ENCODE measurements at regions of chr18 and their contacts with region 1.

Region 1: GRCh38 chr18:12934454-12935071 is 13.2 kb upstream of the SEH1L start:
- DNase-seq: peak; percentile 33
- H3K4me3 ChIP-seq: no peak overlapping the region
- H3K27me3 ChIP-seq: no peaks in the 10 kb centered on the region
- CTCF ChIP-seq: peak; percentile 90

Region 2: DNA sequence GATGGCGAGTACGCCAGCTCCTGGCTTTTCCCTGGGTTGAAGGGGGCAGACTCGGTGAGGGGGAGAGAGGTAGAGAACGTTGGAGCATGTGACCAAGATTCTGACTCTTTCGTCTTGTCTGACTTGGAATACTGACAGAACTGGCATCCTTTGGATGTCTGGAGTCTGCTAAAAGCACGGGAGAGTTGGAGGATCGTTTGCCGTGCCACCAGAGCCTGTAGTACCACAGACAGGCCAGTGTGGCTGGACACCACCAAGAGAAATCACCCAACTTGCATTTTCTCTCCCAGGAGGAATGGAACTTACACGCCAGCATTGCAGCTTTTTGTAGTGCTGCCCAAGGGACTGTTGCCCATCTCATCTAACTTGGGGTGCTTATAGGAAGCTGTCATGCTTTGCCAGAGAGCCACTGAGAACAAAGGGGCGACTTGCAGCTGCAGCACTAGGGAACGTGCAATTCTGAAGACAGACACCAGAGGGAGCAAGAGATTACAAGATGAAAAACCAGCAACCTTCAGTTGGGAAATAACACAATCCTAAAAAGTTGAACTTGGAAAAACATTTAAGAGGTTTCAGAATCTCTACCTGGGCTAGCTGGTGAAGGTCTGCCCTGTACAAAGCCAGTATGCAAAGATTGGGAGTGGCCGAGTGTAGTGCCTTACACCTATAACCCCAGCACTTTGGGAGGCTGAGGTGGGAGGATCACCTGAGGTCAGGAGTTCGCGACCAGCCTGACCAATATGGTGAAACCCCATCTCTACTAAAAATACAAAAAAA is 207.6 kb before region 1 on chr18:
- CTCF ChIA-PET with region 1: interaction called, 157 read pairs
- POLR2A ChIA-PET with region 1: no interaction called
- DNase-seq: no peak
- H3K4me3 ChIP-seq: no peak overlapping the region
- H3K27me3 ChIP-seq: no peaks in the 10 kb centered on the region
- CTCF ChIP-seq: peak; percentile 86

Region 3: DNA sequence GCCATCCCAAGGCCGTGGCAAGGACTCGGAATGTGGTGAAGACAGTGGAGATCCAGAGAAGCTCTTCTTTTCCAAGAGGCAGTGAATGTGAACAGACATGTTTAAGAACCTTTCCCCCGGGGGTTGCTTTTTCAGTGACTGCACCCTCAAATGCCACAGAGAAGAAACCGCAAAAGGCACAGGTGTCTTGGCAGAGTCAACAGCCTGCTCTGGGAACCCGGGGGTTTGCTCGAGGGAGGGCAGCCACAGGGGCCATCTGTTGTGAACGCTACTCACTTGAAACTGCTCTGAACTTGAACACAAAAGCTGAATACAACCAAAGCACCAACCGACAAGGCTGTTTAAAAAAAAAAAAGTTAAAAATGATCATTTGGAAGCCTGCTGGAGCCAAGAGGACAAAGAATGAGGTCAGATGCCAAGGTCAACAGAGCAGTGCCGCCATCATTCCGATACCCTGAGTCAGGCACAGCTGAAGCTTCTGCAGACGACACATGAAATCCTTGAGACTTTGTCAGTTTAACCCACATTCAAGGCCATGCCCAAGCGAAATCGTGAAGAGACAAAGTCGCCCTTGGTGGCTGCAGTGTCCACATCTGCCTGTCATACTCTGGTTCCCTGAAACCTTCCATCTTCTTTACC is 184.4 kb before region 1 on chr18:
- CTCF ChIA-PET with region 1: interaction called, 88 read pairs
- POLR2A ChIA-PET with region 1: no interaction called
- DNase-seq: no peak
- H3K4me3 ChIP-seq: no peak overlapping the region
- H3K27me3 ChIP-seq: no peaks in the 10 kb centered on the region
- CTCF ChIP-seq: no peak

Region 4: GRCh38 chr18:12890506-12890905 is 44.1 kb before region 1 on chr18:
- CTCF ChIA-PET with region 1: interaction called, 22 read pairs
- POLR2A ChIA-PET with region 1: no interaction called
- DNase-seq: no peak
- H3K4me3 ChIP-seq: no peak overlapping the region
- H3K27me3 ChIP-seq: no peaks in the 10 kb centered on the region
- CTCF ChIP-seq: peak; percentile 22; the same call in 1 of the 2 replicates

Region 5: DNA sequence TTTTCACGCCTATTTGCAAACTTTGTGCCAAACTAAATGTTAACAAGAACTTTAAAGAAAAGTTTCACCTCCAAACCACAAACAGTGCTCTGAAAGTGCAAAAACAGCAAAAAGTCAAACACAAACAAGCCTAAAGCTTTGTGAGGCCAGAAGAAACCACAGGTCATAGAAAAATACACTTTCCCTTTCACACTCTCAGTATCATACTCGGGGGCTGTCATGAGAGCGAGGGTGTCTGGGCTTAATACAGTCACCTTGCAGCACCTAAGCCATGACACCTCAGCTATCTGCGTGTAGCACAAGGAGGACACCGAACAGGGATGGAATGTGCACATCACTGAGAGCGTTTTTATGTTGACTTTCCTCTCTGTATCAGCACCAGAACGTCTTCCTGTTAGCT is 13.4 kb before region 1 on chr18:
- CTCF ChIA-PET with region 1: interaction called, 17 read pairs
- POLR2A ChIA-PET with region 1: no interaction called
- DNase-seq: no peak
- H3K4me3 ChIP-seq: no peak overlapping the region
- H3K27me3 ChIP-seq: peaks cover 2% of the 10 kb centered on the region; the same call in 1 of the 2 replicates
- CTCF ChIP-seq: no peak

Measured in BJ (cell line).